ENCODE measurements at regions of chr14 and their contacts with region 1.

Region 1: DNA sequence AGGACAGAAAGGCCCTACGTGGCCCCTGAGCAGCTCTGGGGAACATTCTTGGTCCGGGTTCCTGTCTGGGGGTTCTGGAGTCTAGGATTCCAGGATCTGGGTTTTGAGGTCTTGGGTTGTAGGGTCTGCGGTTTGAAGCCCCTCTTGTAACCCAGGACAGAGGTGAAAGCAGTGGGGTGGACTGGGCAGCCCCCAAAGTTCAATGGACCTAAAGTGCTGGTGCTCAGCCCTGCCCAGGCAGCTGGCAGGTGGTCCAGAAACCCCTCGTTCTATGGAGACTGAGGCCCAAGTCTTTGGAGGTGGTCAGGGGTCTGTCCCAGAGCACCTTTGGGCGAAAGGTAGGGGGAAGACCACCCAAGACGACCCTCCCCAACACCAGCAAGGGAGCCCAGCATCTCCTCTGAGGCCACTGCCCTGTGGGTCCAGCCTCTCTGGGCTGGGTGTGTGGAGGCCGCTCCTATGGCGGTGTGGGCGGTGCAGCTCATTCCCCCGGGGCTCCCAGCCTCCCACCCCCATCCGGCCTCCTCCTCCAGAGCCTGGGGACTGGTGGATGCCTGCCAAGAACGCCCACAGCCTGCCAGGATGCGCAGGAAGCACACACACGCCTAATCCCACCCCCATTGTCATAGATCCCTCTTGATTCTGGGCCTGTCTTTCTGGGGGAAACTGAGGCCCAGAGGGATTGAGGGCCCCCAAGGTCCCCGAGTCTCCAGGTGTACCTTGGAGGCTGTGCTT is 30.2 kb upstream of the ANKRD9 start:
- DNase-seq: no peak

Region 2: DNA sequence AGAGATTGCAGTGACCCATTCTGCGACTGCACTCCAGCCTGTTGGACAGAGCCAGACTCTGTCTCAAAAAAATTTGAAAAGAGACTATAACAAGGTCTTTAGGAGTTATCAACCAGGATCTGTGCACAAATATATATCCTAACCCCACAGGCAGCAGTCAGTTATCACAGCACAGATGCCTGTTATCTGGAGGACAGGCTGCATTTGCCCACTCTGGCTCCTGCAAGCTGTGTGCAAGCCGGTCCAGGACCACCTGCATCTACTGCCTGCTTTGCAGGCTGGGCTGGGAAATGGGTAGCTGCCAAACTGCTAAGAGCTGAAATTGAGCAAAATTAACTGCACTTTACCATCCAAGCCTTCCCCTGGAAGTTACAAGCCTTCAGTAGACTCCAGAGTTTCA is 31.3 kb after region 1 on chr14:
- intact Hi-C with region 1: loop called in 1 of 2 experiments (anchors 1 kb)
- DNase-seq: no peak